ENCODE measurements at regions of chr12 and their contacts with region 1.

Region 1: DNA sequence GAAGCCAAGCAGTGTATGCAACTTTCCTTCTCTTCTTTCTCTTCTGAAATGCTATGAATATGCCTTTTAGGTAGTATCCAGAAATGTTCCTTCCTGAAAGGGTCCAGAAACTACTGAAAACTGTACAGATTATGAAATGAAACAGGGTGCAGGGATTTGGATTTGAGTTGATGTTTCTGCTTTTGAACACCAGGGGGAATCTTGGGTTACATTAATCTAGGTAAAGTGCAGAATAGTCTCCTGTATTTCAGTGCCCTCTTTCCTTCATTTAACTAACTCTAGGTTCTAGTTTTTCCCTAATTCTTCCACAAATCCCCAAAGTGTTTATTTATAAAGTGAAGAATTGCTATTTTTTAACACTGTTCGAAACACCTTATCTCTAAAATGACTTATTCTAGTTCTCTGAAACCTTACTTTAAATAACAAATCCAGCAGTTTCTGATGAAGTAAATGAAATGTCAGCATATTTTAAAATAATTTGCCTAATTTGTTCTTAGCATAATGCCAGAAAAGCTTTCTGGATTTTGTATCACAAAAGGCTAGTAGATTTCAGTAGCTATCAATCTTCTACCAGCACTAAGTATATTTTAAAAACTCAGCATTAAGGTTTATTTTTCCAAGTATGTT is 111.9 kb downstream of the LRRK2 start:
- DNase-seq: peak; percentile 28
- H3K4me3 ChIP-seq: no peak overlapping the region
- H3K27ac ChIP-seq: no peak overlapping the region
- H3K4me1 ChIP-seq: no peaks in the 10 kb centered on the region
- H3K27me3 ChIP-seq: no peaks in the 10 kb centered on the region
- CTCF ChIP-seq: peak; percentile 21 to 44
- POLR2A ChIP-seq: no peak

Region 2: GRCh38 chr12:40312196-40312595 is 24.5 kb before region 1 on chr12:
- CTCF ChIA-PET with region 1: no interaction called
- POLR2A ChIA-PET with region 1: no interaction called
- dilution Hi-C with region 1: no loop called
- intact Hi-C with region 1: no loop called
- DNase-seq: no peak
- H3K4me3 ChIP-seq: no peak overlapping the region
- H3K27ac ChIP-seq: no peak overlapping the region
- H3K4me1 ChIP-seq: no peaks in the 10 kb centered on the region
- H3K27me3 ChIP-seq: no peaks in the 10 kb centered on the region
- CTCF ChIP-seq: no peak
- POLR2A ChIP-seq: no peak

Region 3: GRCh38 chr12:40351976-40352375 is 15.3 kb after region 1 on chr12:
- CTCF ChIA-PET with region 1: interaction called, 34 read pairs
- POLR2A ChIA-PET with region 1: no interaction called
- dilution Hi-C with region 1: no loop called
- intact Hi-C with region 1: no loop called
- DNase-seq: no peak
- H3K4me3 ChIP-seq: no peak overlapping the region
- H3K27ac ChIP-seq: no peak overlapping the region
- H3K4me1 ChIP-seq: no peaks in the 10 kb centered on the region
- H3K27me3 ChIP-seq: no peaks in the 10 kb centered on the region
- CTCF ChIP-seq: no peak
- POLR2A ChIP-seq: no peak

Region 4: DNA sequence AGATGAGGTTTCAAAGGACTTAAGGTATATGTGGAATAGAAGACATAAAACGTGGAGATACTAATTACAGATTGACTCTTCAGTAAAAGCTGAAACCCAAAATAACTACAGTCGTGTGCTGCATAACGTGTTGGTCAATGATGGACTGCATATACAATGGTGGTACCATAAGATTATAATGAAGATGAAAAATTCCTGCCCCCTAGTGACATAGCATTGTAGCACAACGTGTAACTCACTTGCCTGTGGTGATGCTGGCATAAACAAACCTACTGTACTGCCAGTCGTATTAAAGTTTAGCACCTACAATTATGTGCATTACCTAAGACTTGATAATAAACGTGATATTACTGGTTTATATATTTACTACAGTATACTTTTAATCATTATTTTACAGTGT is 38.4 kb after region 1 on chr12:
- CTCF ChIA-PET with region 1: interaction called, 11 read pairs
- POLR2A ChIA-PET with region 1: no interaction called
- dilution Hi-C with region 1: no loop called
- intact Hi-C with region 1: loop called (anchors 2 kb)
- DNase-seq: peak; percentile 38
- H3K4me3 ChIP-seq: no peak overlapping the region
- H3K27ac ChIP-seq: no peak overlapping the region
- H3K4me1 ChIP-seq: no peaks in the 10 kb centered on the region
- H3K27me3 ChIP-seq: no peaks in the 10 kb centered on the region
- CTCF ChIP-seq: peak in 1 of 2 donors; percentile 27
- POLR2A ChIP-seq: no peak

Region 5: DNA sequence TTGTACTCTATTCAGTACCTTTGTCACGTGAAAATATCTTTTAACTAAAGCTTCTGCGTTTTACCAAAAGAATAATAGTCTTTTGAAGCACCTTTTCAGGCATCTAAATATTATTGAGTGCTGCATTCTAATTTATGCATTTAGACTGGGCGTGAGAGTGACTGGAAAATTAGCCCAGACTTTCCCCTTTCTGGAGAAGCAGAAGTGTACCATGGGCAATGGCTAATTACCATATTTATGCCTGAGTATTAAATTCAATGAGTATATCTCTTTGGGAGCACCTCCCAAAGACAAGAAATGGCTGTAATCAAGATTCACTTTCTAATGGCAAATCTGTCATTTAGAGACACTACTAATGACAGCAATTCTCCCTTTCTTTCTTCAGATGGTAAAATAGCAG is 63.0 kb after region 1 on chr12:
- CTCF ChIA-PET with region 1: no interaction called
- POLR2A ChIA-PET with region 1: no interaction called
- dilution Hi-C with region 1: no loop called
- intact Hi-C with region 1: no loop called
- DNase-seq: no peak
- H3K4me3 ChIP-seq: no peak overlapping the region
- H3K27ac ChIP-seq: no peak overlapping the region
- H3K4me1 ChIP-seq: no peaks in the 10 kb centered on the region
- H3K27me3 ChIP-seq: no peaks in the 10 kb centered on the region
- CTCF ChIP-seq: no peak
- POLR2A ChIP-seq: no peak

Region 6: GRCh38 chr12:41424651-41425050 is 1088.0 kb after region 1 on chr12:
- CTCF ChIA-PET with region 1: no interaction called
- POLR2A ChIA-PET with region 1: no interaction called
- dilution Hi-C with region 1: no loop called
- intact Hi-C with region 1: no loop called
- DNase-seq: no peak
- H3K4me3 ChIP-seq: no peak overlapping the region
- H3K27ac ChIP-seq: no peak overlapping the region
- H3K4me1 ChIP-seq: no peaks in the 10 kb centered on the region
- H3K27me3 ChIP-seq: no peaks in the 10 kb centered on the region
- CTCF ChIP-seq: no peak
- POLR2A ChIP-seq: no peak